Sigmoid colon (tissue), 7 donors: ENCODE measurements at regions of chr19 and their contacts with region 1.

Region 1: GRCh38 chr19:5308471-5309437 is 31.9 kb downstream of the PTPRS start:
- DNase-seq: peak; percentile 96
- H3K4me3 ChIP-seq: peak overlapping the region; percentile 4 to 37 (median 36)
- H3K27ac ChIP-seq: peak overlapping the region; percentile 70 to 87 (median 84)
- H3K4me1 ChIP-seq: peaks cover 0 to 14% (median 8%) of the 10 kb centered on the region in 4 donors
- H3K27me3 ChIP-seq: no peaks in the 10 kb centered on the region
- CTCF ChIP-seq: no peak
- EP300 ChIP-seq: peak in 1 of 4 donors; percentile 23
- POLR2A ChIP-seq: peak; percentile 97 to 99

Region 2: GRCh38 chr19:5154129-5154798 is 154.5 kb before region 1 on chr19:
- intact Hi-C with region 1: no loop called
- DNase-seq: peak; percentile 65
- H3K4me3 ChIP-seq: no peak overlapping the region
- H3K27ac ChIP-seq: no peak overlapping the region
- H3K4me1 ChIP-seq: no peaks in the 10 kb centered on the region
- H3K27me3 ChIP-seq: no peaks in the 10 kb centered on the region
- CTCF ChIP-seq: peak in 2 of 4 experiments; percentile 14 to 23
- EP300 ChIP-seq: no peak
- POLR2A ChIP-seq: no peak

Region 3: DNA sequence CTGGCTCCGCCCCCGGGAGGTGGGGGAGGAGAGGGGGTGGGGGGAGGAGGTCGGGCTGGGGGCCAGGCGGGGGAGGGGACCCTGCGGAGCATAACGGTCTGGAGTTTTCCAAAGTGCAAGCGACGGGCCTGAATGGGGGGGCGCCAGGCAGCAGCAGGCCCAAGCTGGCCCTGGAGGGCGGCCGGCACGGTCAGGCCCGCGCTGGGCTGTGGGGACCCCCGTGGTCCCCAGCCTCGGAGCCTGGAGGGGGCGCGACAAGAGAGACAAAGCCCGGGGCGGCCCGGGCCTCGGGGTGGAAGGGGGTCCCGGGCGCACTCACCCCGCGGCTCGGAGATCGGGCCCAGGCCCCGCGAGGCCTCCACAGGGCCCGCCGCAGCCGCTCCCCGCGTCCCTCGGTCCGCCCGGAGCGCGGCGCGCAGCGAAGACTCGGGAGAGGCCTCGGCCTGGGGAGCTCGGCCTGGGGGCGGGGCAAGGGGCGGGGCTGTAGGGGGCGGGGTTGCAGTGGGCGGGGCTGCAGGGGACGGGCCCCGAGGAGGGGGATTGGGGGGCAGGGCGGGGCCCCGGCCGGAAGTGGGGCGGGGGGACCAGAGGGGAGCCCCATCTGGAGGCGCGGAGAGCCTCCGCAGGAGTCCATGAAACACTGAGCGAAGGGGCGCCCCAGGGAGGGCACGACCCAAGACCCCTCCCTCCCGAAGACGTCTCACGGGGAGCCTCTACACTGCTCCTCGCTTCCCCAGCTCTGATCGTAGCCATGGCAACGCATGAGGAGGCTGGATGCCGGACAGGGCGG is 15.7 kb before region 1 on chr19:
- intact Hi-C with region 1: loop called (anchors 2 kb)
- DNase-seq: peak; percentile 86
- H3K4me3 ChIP-seq: peak overlapping the region; percentile 72 to 94 (median 82)
- H3K27ac ChIP-seq: peak overlapping the region; percentile 89 to 95 (median 92)
- H3K4me1 ChIP-seq: peaks cover 0 to 61% (median 57%) of the 10 kb centered on the region in 4 donors
- H3K27me3 ChIP-seq: no peaks in the 10 kb centered on the region
- CTCF ChIP-seq: no peak
- EP300 ChIP-seq: no peak
- POLR2A ChIP-seq: no peak

Region 4: DNA sequence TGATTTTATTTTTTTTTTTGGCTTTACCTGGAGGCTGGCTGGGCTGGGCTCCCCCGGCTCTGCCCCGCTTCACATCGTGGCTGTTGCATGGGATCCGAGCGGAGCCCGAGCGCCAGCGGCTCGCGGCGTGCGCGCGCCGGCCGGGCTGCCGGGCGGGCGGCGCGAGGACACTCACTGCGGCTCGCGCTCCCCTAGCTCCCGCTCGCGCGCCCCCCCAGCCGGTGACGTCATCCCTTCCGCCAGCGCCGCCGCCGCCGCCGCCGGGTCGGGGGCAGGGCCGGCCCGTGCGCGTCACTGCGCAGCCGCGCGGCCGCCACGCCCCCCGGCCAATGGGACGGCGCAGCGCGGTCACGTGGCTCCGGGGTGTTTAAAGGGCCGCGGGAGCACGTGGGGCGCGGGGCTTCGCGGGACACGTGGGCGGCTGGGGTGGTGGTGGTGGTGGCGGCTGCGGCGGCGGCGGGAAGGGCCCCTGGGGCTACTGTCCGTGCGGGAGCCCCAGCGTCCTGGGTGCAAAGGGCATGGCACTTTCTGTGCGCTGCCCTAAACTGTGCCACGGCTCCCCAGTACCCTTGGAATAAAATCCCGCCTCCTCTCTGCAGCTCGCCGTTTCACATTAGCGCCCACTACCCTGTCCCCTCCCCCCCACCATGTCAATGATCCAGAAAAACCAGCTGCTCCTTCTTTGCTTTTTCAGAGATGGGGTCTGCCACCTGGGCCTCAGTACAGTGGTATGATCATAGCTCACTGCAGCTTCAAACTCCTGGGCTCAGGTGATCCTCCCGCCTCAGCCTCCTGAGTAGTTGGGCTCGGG is 32.1 kb after region 1 on chr19 and contains the start of gene PTPRS:
- intact Hi-C with region 1: loop called (anchors 1 kb)
- DNase-seq: peak; percentile 88
- H3K4me3 ChIP-seq: peak within 1 kb of the TSS; percentile 40 to 77 (median 60)
- H3K27ac ChIP-seq: peak within 1 kb of the TSS; percentile 35 to 73 (median 56)
- H3K4me1 ChIP-seq: peaks cover 0 to 26% (median 24%) of the 10 kb centered on the region in 4 donors
- H3K27me3 ChIP-seq: peaks cover 16 to 41% (median 41%) of the 10 kb centered on the region in 3 donors
- CTCF ChIP-seq: no peak
- EP300 ChIP-seq: no peak
- POLR2A ChIP-seq: no peak
- total RNA-seq, gene PTPRS: 120 to 211 (median 139) TPM